Activated B cell treated with CpG ODN at 0.5 μM for 24 hours (primary cell): ENCODE measurements at regions of chr12 and their contacts with region 1.

Region 1: GRCh38 chr12:115998119-115998633 is 279.3 kb downstream of the MED13L start:
- DNase-seq: no peak
- ATAC-seq: peak; percentile 90
- H3K4me3 Mint-ChIP-seq: no peak overlapping the region
- H3K27ac Mint-ChIP-seq: peak overlapping the region; percentile 78
- H3K4me1 Mint-ChIP-seq: peaks cover 10% of the 10 kb centered on the region
- H3K27me3 Mint-ChIP-seq: no peaks in the 10 kb centered on the region
- CTCF ChIP-seq: peak; percentile 57

Region 2: GRCh38 chr12:115946867-115947696 is 51.1 kb before region 1 on chr12:
- CTCF ChIA-PET with region 1: no interaction called
- POLR2A ChIA-PET with region 1: no interaction called
- intact Hi-C with region 1: no loop called
- DNase-seq: no peak
- ATAC-seq: no peak
- H3K4me3 Mint-ChIP-seq: no peak overlapping the region
- H3K27ac Mint-ChIP-seq: no peak overlapping the region
- H3K4me1 Mint-ChIP-seq: no peaks in the 10 kb centered on the region
- H3K27me3 Mint-ChIP-seq: no peaks in the 10 kb centered on the region
- CTCF ChIP-seq: no peak

Region 3: GRCh38 chr12:116015525-116015924 is 17.3 kb after region 1 on chr12:
- CTCF ChIA-PET with region 1: no interaction called
- POLR2A ChIA-PET with region 1: no interaction called
- intact Hi-C with region 1: no loop called
- DNase-seq: no peak
- ATAC-seq: peak; percentile 67
- H3K4me3 Mint-ChIP-seq: no peak overlapping the region
- H3K27ac Mint-ChIP-seq: no peak overlapping the region
- H3K4me1 Mint-ChIP-seq: no peaks in the 10 kb centered on the region
- H3K27me3 Mint-ChIP-seq: no peaks in the 10 kb centered on the region
- CTCF ChIP-seq: no peak

Region 4: GRCh38 chr12:116076399-116076798 is 78.2 kb after region 1 on chr12:
- CTCF ChIA-PET with region 1: no interaction called
- POLR2A ChIA-PET with region 1: no interaction called
- intact Hi-C with region 1: no loop called
- DNase-seq: no peak
- ATAC-seq: no peak
- H3K4me3 Mint-ChIP-seq: no peak overlapping the region
- H3K27ac Mint-ChIP-seq: no peak overlapping the region
- H3K4me1 Mint-ChIP-seq: peaks cover 7% of the 10 kb centered on the region
- H3K27me3 Mint-ChIP-seq: no peaks in the 10 kb centered on the region
- CTCF ChIP-seq: no peak

Region 5: DNA sequence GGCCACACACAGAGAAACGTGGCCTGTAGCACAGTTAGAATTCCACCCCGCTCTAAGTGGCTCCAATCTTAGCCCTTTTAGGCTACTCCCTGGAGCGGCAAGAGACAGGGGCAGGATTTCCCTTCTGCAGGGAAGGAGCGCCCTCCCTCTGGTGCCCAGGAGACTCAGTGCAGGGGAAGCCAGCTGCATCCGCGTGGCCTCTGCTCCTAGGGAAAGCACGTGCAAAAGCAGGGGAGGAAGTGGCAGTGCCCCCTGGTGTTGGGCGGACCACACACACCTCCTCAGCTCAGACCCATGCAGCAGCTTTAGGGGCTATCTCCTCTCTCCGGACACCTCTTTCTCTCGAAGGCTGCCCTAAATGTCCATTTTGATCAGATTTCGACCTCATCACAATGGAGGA is 689.7 kb after region 1 on chr12:
- CTCF ChIA-PET with region 1: interaction called, 3 read pairs
- POLR2A ChIA-PET with region 1: no interaction called
- intact Hi-C with region 1: loop called (anchors 5 kb)
- DNase-seq: peak; percentile 44
- ATAC-seq: peak; percentile 94
- H3K4me3 Mint-ChIP-seq: no peak overlapping the region
- H3K27ac Mint-ChIP-seq: no peak overlapping the region
- H3K4me1 Mint-ChIP-seq: peaks cover 25% of the 10 kb centered on the region
- H3K27me3 Mint-ChIP-seq: peaks cover 9% of the 10 kb centered on the region
- CTCF ChIP-seq: no peak